Activated T-helper 2 cell treated with anti-CD3 and anti-CD28 coated beads, Interferon-gamma antibody, Interleukin-2, Interleukin-4, amounts not matched to agents 10 μg/mL and 5 μg/mL and 100 μg/mL, durations not matched to agents 14 hours and 24 hours and 36 hours (primary cell): ENCODE measurements at regions of chr11 and their contacts with region 1.

Region 1: DNA sequence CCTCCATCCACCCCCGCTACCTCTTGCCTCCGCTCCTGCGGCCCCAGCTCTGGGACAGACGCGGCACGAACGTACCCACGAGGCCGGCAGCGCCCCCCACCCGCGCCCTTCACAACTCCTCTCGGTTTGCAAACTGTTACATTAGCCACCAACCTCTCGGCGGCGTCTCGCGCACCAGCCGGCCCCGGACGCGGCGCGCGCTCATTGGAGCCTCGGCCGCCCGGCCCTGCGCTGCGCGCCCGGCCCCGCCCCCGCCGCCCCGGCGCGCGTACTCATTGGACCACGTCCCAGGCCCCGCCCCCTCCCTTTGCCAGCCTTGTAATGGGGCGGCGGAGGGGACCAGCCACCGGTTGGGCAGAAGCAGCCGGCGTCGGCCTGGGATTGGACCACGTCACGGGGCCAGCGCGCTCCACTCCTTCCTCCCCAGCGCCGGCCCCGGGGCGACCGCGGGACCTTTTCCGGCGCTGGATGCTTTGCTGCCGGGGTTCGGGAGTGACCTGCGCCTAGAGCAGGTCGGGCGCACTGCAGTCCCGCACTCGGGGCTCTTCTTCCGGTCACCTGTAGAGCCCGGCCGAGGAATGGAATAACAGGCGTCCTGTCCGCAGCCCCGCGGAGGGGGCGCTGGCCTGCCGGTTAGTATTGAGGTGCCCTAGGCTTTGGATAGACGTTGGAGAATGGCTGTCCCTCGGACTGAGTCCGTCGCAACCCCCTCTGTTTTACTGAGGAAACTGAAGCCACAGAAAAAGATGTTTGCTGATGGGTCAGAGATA is at the start of gene HYOU1:
- DNase-seq: peak; percentile 97
- H3K4me3 Mint-ChIP-seq: peak within 1 kb of the TSS; percentile 98
- H3K27ac Mint-ChIP-seq: peak within 1 kb of the TSS; percentile 99
- H3K4me1 Mint-ChIP-seq: peaks cover 28% of the 10 kb centered on the region
- H3K27me3 Mint-ChIP-seq: no peaks in the 10 kb centered on the region
- total RNA-seq, gene HYOU1: 215 and 226 TPM in 2 replicates

Region 2: DNA sequence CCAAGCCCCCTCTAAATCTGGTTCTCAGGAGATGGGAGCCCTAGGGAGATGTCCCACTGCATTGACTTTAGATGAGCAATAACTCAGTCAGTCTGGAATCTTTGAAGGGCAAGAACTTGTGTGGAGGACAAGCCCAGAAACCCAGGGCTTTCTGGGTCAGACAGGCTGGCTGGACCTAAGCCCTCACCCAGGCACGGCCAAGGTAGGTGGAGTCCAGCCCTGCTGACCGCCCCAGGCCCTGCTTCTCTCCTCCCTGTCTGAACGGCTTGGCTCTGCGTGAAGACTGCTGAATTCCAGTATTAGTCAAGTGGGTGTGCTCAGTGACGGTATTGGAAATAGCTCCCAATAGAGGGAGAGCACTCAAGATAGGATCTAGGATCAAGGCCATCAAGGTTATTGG is 167.4 kb before region 1 on chr11:
- intact Hi-C with region 1: no loop called
- DNase-seq: no peak
- H3K4me3 Mint-ChIP-seq: no peak overlapping the region
- H3K27ac Mint-ChIP-seq: no peak overlapping the region
- H3K4me1 Mint-ChIP-seq: peaks cover 44% of the 10 kb centered on the region
- H3K27me3 Mint-ChIP-seq: no peaks in the 10 kb centered on the region

Region 3: GRCh38 chr11:118997627-118998387 is 59.4 kb before region 1 on chr11 and contains the start of gene CENATAC:
- intact Hi-C with region 1: loop called (anchors 5 kb)
- DNase-seq: peak; percentile 95
- H3K4me3 Mint-ChIP-seq: peak within 1 kb of the TSS; percentile 99
- H3K27ac Mint-ChIP-seq: peak within 1 kb of the TSS; percentile 98
- H3K4me1 Mint-ChIP-seq: peaks cover 21% of the 10 kb centered on the region
- H3K27me3 Mint-ChIP-seq: no peaks in the 10 kb centered on the region
- total RNA-seq, gene CENATAC: 44.2 and 47.7 TPM in 2 replicates

Region 4: GRCh38 chr11:119018074-119018938 is 38.9 kb before region 1 on chr11 and contains the starts of genes RPS25 and TRAPPC4:
- intact Hi-C with region 1: loop called (anchors 2 kb)
- DNase-seq: peak; percentile 93
- H3K4me3 Mint-ChIP-seq: peak within 1 kb of the TSS; percentile 99
- H3K27ac Mint-ChIP-seq: peak within 1 kb of the TSS; percentile 100
- H3K4me1 Mint-ChIP-seq: peaks cover 25% of the 10 kb centered on the region
- H3K27me3 Mint-ChIP-seq: no peaks in the 10 kb centered on the region
- total RNA-seq, gene RPS25: 1,728 and 1,773 TPM in 2 replicates
- total RNA-seq, gene TRAPPC4: 121 and 128 TPM in 2 replicates

Region 5: GRCh38 chr11:119030329-119031049 is 26.7 kb before region 1 on chr11 and contains the start of gene SLC37A4:
- intact Hi-C with region 1: loop called (anchors 1 kb)
- DNase-seq: peak; percentile 98
- H3K4me3 Mint-ChIP-seq: peak within 1 kb of the TSS; percentile 75
- H3K27ac Mint-ChIP-seq: peak within 1 kb of the TSS; percentile 65
- H3K4me1 Mint-ChIP-seq: peaks cover 15% of the 10 kb centered on the region
- H3K27me3 Mint-ChIP-seq: no peaks in the 10 kb centered on the region
- total RNA-seq, gene SLC37A4: 31.7 and 34.4 TPM in 2 replicates

Region 6: DNA sequence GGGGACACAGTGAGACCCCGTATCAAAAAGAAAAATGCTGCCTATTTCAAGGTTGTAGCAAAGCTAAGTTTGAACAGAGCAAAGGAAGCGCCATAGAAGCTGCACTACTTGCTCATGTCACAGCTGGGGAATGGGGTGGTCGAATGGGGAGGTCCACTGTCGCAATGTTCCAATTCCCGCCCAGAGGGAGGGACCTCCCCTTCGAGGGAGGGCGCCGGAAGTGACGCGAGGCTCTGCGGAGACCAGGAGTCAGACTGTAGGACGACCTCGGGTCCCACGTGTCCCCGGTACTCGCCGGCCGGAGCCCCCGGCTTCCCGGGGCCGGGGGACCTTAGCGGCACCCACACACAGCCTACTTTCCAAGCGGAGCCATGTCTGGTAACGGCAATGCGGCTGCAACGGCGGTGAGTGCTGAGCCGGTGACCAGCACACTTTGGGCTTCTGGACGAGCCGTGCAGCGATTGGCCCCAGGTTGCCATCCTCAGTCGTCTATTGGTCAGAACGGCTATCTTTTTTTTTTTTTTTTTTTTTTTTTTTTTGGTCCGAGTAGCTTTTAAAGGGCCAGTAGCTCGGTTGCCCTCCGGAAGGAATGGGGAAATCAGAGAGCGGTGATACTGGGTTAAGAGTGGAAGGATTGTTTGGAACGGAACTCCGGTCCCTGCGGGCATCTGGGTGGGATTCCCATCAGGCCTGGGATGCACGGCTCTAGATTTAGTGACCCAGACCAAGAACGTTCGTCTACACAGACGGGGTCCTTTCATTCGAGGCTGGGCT is 27.7 kb after region 1 on chr11 and contains the start of gene HMBS:
- intact Hi-C with region 1: loop called (anchors 1 kb)
- DNase-seq: peak; percentile 91
- H3K4me3 Mint-ChIP-seq: peak within 1 kb of the TSS; percentile 96
- H3K27ac Mint-ChIP-seq: peak within 1 kb of the TSS; percentile 93
- H3K4me1 Mint-ChIP-seq: peaks cover 29% of the 10 kb centered on the region
- H3K27me3 Mint-ChIP-seq: no peaks in the 10 kb centered on the region
- total RNA-seq, gene HMBS: 57.4 and 59.0 TPM in 2 replicates

Region 7: GRCh38 chr11:119095066-119095880 is 38.1 kb after region 1 on chr11:
- intact Hi-C with region 1: loop called (anchors 1 kb)
- DNase-seq: peak; percentile 99
- H3K4me3 Mint-ChIP-seq: peak overlapping the region; percentile 89
- H3K27ac Mint-ChIP-seq: peak overlapping the region; percentile 89
- H3K4me1 Mint-ChIP-seq: peaks cover 50% of the 10 kb centered on the region
- H3K27me3 Mint-ChIP-seq: peaks cover 2% of the 10 kb centered on the region